H1 (cell line): ENCODE measurements at regions of chr11 and their contacts with region 1.

Region 1: GRCh38 chr11:70818351-70818750 is 420.0 kb downstream of the CTTN start:
- DNase-seq: no peak
- H3K4me3 ChIP-seq: no peak overlapping the region
- H3K27ac ChIP-seq: no peak overlapping the region
- H3K4me1 ChIP-seq: peaks cover 0 to 6% (median 0%) of the 10 kb centered on the region in 4 experiments; a peak in 2 of 7 replicates
- H3K27me3 ChIP-seq: no peaks in the 10 kb centered on the region
- CTCF ChIP-seq: no peak
- EP300 ChIP-seq: no peak
- POLR2A ChIP-seq: no peak
- RAD21 ChIP-seq: no peak

Region 2: GRCh38 chr11:70796648-70797227 is 21.6 kb before region 1 on chr11:
- CTCF ChIA-PET with region 1: interaction called, 14 read pairs
- POLR2A ChIA-PET with region 1: interaction called, 8 read pairs
- DNase-seq: peak in 1 of 2 experiments; percentile 53
- H3K4me3 ChIP-seq: no peak overlapping the region
- H3K27ac ChIP-seq: no peak overlapping the region
- H3K4me1 ChIP-seq: peaks cover 0 to 4% (median 0%) of the 10 kb centered on the region in 4 experiments; a peak in 1 of 7 replicates
- H3K27me3 ChIP-seq: no peaks in the 10 kb centered on the region
- CTCF ChIP-seq: peak; percentile 27 to 72 (median 53)
- EP300 ChIP-seq: no peak
- POLR2A ChIP-seq: no peak
- RAD21 ChIP-seq: peak; percentile 34 to 52

Region 3: GRCh38 chr11:70834277-70834940 is 16.1 kb after region 1 on chr11:
- CTCF ChIA-PET with region 1: interaction called, 26 read pairs
- POLR2A ChIA-PET with region 1: interaction called, 3 read pairs
- DNase-seq: no peak
- H3K4me3 ChIP-seq: peak overlapping the region in 1 of 4 experiments; percentile 32; a peak in 1 of 8 replicates
- H3K27ac ChIP-seq: 0 out of 2 replicates have a peak overlapping the region, but pooled peaks have one; percentile 34
- H3K4me1 ChIP-seq: peaks cover 6 to 22% (median 12%) of the 10 kb centered on the region in 4 experiments
- H3K27me3 ChIP-seq: no peaks in the 10 kb centered on the region
- CTCF ChIP-seq: no peak
- EP300 ChIP-seq: peak in 1 of 2 experiments; percentile 77; a peak in 1 of 3 replicates
- POLR2A ChIP-seq: no peak
- RAD21 ChIP-seq: peak in 1 of 2 experiments; percentile 17; a peak in 1 of 4 replicates

Region 4: GRCh38 chr11:70942593-70942992 is 124.2 kb after region 1 on chr11:
- CTCF ChIA-PET with region 1: interaction called, 30 read pairs
- POLR2A ChIA-PET with region 1: no interaction called
- DNase-seq: peak in 1 of 2 experiments; percentile 66
- H3K4me3 ChIP-seq: no peak overlapping the region
- H3K27ac ChIP-seq: no peak overlapping the region
- H3K4me1 ChIP-seq: peaks cover 0 to 3% (median 0%) of the 10 kb centered on the region in 4 experiments; a peak in 1 of 7 replicates
- H3K27me3 ChIP-seq: no peaks in the 10 kb centered on the region
- CTCF ChIP-seq: peak; percentile 47 to 77 (median 61)
- EP300 ChIP-seq: no peak
- POLR2A ChIP-seq: no peak
- RAD21 ChIP-seq: peak; percentile 72 to 74